Left cardiac atrium (tissue), 4 donors: ENCODE measurements at regions of chr11 and their contacts with region 1.

Region 1: DNA sequence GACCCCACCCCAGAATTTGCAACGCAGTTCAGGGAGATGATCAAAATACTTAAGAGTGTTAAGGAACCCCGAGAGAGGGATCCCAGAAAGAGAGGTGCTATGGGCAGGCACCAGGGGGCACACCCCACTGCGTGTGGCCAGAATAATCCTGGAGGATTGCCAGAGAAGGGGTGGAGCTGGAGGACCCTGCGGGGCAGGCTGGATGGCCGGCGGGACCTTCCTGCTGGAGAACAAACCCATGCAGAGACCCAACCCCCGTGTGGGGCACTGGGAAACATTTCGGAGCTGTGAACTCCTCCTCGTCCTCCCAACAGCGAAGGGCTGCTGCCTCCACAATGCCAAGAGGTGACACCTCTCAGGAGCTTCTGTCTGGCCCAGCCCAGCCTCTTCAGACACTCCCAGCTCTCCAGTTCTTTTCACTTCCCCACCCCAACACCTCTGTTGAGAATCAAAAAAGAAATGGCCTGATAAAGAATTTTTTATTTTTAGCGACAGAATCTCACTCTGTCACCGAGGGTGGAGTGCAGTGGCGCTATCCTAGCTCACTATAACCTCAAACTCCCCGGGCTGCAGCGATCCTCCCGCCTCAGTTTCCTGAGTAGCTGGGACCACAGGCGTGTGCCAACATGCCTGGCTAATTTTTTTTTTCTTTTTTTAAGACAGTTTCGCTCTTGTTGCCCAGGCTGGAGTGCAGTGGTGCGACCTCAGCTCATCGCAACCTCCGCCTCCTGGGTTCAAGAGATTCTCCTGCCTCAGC is 25.6 kb downstream of the RHOD start:
- DNase-seq: no peak
- ATAC-seq: peak; percentile 63 to 73

Region 2: GRCh38 chr11:67022328-67022927 is 59.8 kb before region 1 on chr11:
- intact Hi-C with region 1: no loop called
- DNase-seq: peak; percentile 44
- ATAC-seq: peak; percentile 46 to 53

Region 3: DNA sequence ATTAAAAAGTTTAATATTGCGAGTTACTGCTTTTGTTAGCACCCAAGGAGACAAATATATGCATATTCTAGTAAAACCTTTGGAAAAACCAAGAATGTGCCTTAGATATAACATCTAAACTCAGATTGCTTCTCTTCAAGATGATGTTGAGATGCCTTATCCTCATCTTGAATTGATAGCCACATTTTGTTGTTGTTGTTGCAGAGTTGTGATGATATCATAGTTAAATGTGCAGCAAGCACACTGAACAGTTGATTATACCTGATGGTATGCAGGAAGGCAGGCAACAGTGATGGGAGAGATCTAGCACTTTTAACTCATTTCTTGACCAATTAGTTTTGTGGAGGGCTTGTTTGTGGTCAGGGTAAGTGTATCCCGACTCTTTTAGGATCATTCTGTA is 84.9 kb after region 1 on chr11:
- intact Hi-C with region 1: loop called (anchors 5 kb)
- DNase-seq: no peak
- ATAC-seq: no peak

Region 4: DNA sequence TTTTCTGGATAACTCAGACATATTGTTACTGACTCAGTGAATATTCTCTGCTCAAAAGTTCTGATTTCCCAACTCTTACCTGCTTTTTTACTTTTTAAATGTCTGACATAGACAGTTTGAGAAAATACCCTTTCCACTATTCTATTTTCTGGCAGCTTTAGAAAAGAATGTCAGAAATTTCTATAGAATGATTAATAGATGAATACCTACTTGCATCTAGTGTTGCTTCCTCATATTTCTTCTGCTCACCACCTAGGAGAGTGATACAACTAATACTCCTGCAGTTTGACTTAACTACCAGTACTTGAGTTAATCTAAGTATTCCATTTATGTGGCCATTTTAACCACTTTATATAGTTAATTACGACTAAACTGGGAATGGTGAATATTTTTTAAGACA is 92.1 kb after region 1 on chr11:
- intact Hi-C with region 1: loop called (anchors 5 kb)
- DNase-seq: no peak
- ATAC-seq: no peak

Region 5: DNA sequence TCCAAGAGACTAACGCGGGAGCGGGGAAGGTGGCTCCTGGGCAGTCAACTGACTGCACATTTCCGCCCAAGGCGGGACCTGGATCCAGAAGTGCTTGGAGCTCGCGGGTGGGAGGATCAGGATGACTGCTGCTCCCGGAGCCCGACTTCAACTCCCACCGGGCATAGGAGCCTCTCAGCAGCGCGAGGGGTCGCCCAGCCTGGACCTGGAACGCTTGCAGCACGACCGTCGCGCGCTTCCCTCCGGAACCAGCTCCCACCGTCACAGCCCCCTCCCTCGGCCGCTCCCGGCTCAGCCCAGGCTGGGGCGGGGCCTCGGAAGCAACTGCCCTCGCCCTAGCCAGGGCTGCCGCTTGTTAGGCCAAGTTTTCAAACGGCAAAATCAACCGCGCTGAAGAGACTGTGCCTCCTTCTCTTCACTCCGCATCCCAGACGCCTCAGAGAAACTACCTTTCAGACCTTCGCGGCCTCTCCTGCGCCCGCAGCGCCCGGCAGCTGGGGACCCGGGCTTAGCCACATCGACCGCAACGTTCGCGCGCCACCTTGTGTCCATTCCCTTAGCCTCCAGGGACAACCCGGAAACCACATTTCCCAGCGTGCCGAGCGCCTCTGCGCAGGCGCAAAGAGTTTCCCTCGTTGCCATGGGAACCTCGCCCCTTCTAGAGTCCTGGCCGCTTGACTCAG is 235.1 kb after region 1 on chr11:
- intact Hi-C with region 1: loop called in 1 of 2 experiments (anchors 5 kb)
- DNase-seq: peak; percentile 97
- ATAC-seq: peak; percentile 93 to 94